CD4-positive, alpha-beta T cell (primary cell): ENCODE measurements at regions of chr1 and their contacts with region 1.

Region 1: DNA sequence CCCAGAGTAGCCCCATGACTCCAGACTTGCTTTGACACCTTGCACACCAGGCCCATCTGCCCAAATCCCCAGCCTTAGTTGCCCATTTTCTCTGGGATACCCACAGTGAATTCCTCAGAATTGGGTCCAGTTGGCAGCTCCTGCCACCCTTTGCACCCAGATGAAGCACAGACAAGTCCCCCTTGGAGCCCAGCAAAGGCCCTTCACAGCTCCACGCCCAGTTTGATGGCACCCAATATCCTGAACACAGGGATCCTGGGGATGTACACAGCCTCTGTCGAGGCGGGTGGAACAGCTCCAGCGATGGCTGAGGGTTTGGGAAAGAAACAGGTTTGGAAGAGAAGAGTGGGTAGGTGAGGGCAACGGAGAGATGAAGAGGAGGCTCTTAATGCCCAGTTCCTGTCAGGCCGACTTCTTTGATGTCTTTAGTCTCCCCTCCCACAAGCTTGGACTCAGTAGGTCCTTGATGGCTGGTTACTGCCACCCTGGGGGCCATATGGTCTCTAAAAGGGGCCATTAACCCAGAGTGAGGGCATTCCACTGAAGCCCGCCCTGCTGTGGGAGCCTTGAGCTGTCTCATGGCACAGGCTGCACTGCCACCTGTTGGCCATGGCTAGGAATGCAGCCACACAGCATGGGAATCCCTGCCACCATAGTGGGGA is 21.7 kb downstream of the TMEM53 start:
- DNase-seq: peak; percentile 60 to 85 (median 70)
- ATAC-seq: peak; percentile 98
- H3K4me3 ChIP-seq: no peak overlapping the region
- H3K4me3 Mint-ChIP-seq: no peak overlapping the region
- H3K27ac ChIP-seq: no peak overlapping the region
- H3K27ac Mint-ChIP-seq: peak overlapping the region; percentile 40
- H3K4me1 ChIP-seq: no peaks in the 10 kb centered on the region
- H3K4me1 Mint-ChIP-seq: no peaks in the 10 kb centered on the region
- H3K27me3 ChIP-seq: no peaks in the 10 kb centered on the region
- H3K27me3 Mint-ChIP-seq: no peaks in the 10 kb centered on the region
- CTCF ChIP-seq: peak; percentile 89

Region 2: GRCh38 chr1:44213222-44214112 is 439.1 kb before region 1 on chr1 and contains the start of gene DMAP1:
- CTCF ChIA-PET with region 1: interaction called, 4 read pairs
- POLR2A ChIA-PET with region 1: no interaction called
- intact Hi-C with region 1: loop called (anchors 1 to 2 kb)
- DNase-seq: peak; percentile 77 to 92 (median 82)
- ATAC-seq: peak; percentile 89
- H3K4me3 ChIP-seq: peak within 1 kb of the TSS; percentile 92
- H3K4me3 Mint-ChIP-seq: peak within 1 kb of the TSS; percentile 98
- H3K27ac ChIP-seq: peak within 1 kb of the TSS; percentile 64 to 75
- H3K27ac Mint-ChIP-seq: peak within 1 kb of the TSS; percentile 93
- H3K4me1 ChIP-seq: peaks cover 29% of the 10 kb centered on the region
- H3K4me1 Mint-ChIP-seq: peaks cover 47% of the 10 kb centered on the region
- H3K27me3 ChIP-seq: no peaks in the 10 kb centered on the region
- H3K27me3 Mint-ChIP-seq: no peaks in the 10 kb centered on the region
- CTCF ChIP-seq: no peak
- total RNA-seq, gene DMAP1: 53.4 to 56.9 TPM

Region 3: GRCh38 chr1:44377925-44378784 is 274.4 kb before region 1 on chr1:
- CTCF ChIA-PET with region 1: interaction called, 6 read pairs
- POLR2A ChIA-PET with region 1: no interaction called
- intact Hi-C with region 1: loop called in 1 of 2 experiments (anchors 1 kb)
- DNase-seq: peak; percentile 6 to 71 (median 24)
- ATAC-seq: no peak
- H3K4me3 ChIP-seq: no peak overlapping the region
- H3K4me3 Mint-ChIP-seq: no peak overlapping the region
- H3K27ac ChIP-seq: no peak overlapping the region
- H3K27ac Mint-ChIP-seq: no peak overlapping the region
- H3K4me1 ChIP-seq: no peaks in the 10 kb centered on the region
- H3K4me1 Mint-ChIP-seq: no peaks in the 10 kb centered on the region
- H3K27me3 ChIP-seq: no peaks in the 10 kb centered on the region
- H3K27me3 Mint-ChIP-seq: no peaks in the 10 kb centered on the region
- CTCF ChIP-seq: peak; percentile 52

Region 4: GRCh38 chr1:44401256-44402228 is 251.0 kb before region 1 on chr1:
- CTCF ChIA-PET with region 1: no interaction called
- POLR2A ChIA-PET with region 1: no interaction called
- intact Hi-C with region 1: no loop called
- DNase-seq: no peak
- ATAC-seq: no peak
- H3K4me3 ChIP-seq: no peak overlapping the region
- H3K4me3 Mint-ChIP-seq: no peak overlapping the region
- H3K27ac ChIP-seq: no peak overlapping the region
- H3K27ac Mint-ChIP-seq: no peak overlapping the region
- H3K4me1 ChIP-seq: peaks cover 19% of the 10 kb centered on the region
- H3K4me1 Mint-ChIP-seq: peaks cover 18% of the 10 kb centered on the region
- H3K27me3 ChIP-seq: peaks cover 46 to 78% of the 10 kb centered on the region in 2 experiments
- H3K27me3 Mint-ChIP-seq: peaks cover 83% of the 10 kb centered on the region
- CTCF ChIP-seq: no peak

Region 5: DNA sequence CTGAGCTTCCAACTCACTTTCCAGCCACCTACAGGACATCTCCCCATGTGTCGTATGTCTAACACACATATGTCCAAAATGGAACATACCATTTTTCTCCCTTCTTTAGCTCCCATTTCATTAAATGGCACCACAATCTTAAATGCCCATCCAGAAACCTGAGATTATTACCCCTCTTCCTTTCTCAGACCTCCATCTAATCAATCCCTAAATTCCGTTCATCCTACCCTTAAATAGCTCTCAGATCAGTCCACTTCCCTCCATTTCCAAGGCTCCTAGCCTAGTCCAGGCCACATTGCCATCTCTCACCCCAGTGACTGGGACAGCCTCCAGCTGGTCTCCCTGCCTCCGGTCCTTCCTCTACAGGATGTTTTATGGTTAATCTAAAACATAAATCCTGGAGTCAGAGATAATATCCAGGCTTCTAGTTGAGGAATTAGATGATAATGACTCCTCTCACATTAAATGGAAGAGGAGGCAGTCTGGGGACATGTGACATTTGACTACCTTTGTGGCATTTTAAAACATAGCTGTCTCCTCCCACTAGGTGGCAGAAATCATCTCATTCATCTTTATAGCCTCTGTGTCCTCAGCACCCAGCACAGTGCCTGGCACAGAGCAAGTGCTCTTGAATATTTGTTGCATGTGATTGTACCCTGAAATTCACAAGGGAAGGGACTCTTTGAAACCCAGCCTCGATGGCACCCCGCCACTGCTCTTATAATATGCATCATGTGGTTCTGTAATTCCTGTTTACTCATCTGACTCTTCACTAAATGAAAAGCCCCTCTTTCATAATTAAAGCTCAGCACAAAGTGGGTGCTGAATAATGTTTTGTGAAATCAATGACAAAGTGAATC is 80.6 kb before region 1 on chr1:
- CTCF ChIA-PET with region 1: interaction called, 40 read pairs
- POLR2A ChIA-PET with region 1: no interaction called
- intact Hi-C with region 1: loop called (anchors 1 kb)
- DNase-seq: peak in 4 of 14 experiments; percentile 24 to 61 (median 50)
- ATAC-seq: no peak
- H3K4me3 ChIP-seq: no peak overlapping the region
- H3K4me3 Mint-ChIP-seq: no peak overlapping the region
- H3K27ac ChIP-seq: no peak overlapping the region
- H3K27ac Mint-ChIP-seq: no peak overlapping the region
- H3K4me1 ChIP-seq: no peaks in the 10 kb centered on the region
- H3K4me1 Mint-ChIP-seq: no peaks in the 10 kb centered on the region
- H3K27me3 ChIP-seq: no peaks in the 10 kb centered on the region
- H3K27me3 Mint-ChIP-seq: peaks cover 8% of the 10 kb centered on the region
- CTCF ChIP-seq: peak; percentile 65

Region 6: DNA sequence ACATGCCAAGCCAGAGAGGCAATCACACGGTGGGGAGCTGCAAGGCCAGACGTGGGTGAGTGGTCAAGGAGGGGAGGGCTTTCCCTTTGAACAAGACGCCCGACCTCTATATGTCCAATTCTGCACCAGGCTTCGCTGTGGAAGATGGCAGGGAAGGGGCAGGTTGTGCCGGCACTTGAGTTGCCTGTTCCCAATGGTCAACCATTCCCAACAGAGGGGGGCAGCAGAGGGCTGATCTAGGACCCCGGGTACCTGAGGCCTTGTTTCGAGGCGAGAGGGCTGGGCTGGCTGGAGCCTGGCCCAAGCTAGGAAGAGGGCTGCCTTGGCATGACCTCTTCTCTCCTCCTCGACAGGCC is 43.2 kb before region 1 on chr1:
- CTCF ChIA-PET with region 1: interaction called, 6 read pairs
- POLR2A ChIA-PET with region 1: no interaction called
- intact Hi-C with region 1: loop called (anchors 1 to 2 kb)
- DNase-seq: peak in 12 of 14 experiments; percentile 6 to 49 (median 18)
- ATAC-seq: no peak
- H3K4me3 ChIP-seq: no peak overlapping the region
- H3K4me3 Mint-ChIP-seq: no peak overlapping the region
- H3K27ac ChIP-seq: no peak overlapping the region
- H3K27ac Mint-ChIP-seq: no peak overlapping the region
- H3K4me1 ChIP-seq: no peaks in the 10 kb centered on the region
- H3K4me1 Mint-ChIP-seq: no peaks in the 10 kb centered on the region
- H3K27me3 ChIP-seq: no peaks in the 10 kb centered on the region
- H3K27me3 Mint-ChIP-seq: no peaks in the 10 kb centered on the region
- CTCF ChIP-seq: peak; percentile 15